Activated CD8-positive, alpha-beta T cell treated with anti-CD3 and anti-CD28 coated beads for 36 hours (primary cell): ENCODE measurements at regions of chr7 and their contacts with region 1.

Region 1: DNA sequence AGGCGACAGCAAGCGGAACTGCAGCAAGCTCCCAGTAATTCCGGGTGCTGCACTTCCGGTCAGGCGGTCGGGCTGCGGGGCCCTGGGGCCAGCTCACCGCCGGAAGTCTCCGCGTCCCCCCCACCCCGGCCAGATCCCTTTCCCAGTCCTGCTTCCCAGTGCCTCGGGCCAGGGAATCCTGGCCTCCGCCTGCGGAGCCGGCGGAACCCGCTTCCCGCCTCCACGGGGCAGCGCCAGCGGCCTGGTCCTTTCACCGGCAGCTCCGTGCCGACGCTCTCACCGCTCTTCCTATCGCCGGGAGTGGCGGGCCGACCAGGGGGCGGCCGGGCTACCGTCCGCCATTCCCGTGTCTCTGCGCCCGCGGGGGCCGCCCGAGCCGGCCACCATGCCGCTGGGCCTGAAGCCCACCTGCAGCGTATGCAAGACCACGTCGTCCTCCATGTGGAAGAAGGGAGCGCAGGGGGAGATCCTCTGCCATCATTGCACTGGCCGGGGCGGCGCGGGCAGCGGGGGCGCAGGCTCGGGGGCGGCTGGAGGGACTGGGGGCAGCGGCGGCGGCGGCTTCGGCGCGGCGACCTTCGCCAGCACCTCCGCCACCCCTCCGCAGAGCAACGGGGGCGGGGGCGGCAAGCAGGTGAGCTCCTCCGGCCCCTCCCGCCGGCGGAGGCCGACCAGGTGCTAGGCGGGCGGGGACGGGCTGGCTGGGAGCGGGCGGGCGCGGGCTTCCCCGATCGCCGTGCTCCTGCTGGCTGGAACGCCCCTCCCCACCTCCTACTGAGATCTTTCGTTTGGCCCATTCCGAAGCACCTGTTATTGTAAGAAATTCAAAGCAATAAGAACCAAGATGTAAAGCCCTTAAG is at the start of gene GATAD1:
- DNase-seq: peak; percentile 86
- ATAC-seq: peak; percentile 92
- H3K4me3 Mint-ChIP-seq: peak within 1 kb of the TSS; percentile 76
- H3K27ac Mint-ChIP-seq: peak within 1 kb of the TSS; percentile 93
- H3K4me1 Mint-ChIP-seq: peaks cover 18% of the 10 kb centered on the region
- H3K27me3 Mint-ChIP-seq: no peaks in the 10 kb centered on the region
- CTCF ChIP-seq: no peak
- total RNA-seq, gene GATAD1: 19.7 to 19.8 TPM

Region 2: GRCh38 chr7:92245487-92246362 is 201.8 kb before region 1 on chr7 and contains the starts of genes ANKIB1 and KRIT1:
- CTCF ChIA-PET with region 1: interaction called, 30 read pairs
- POLR2A ChIA-PET with region 1: interaction called, 9 read pairs
- intact Hi-C with region 1: no loop called
- DNase-seq: peak; percentile 92
- ATAC-seq: peak; percentile 80
- H3K4me3 Mint-ChIP-seq: peak within 1 kb of the TSS; percentile 100
- H3K27ac Mint-ChIP-seq: peak within 1 kb of the TSS; percentile 99
- H3K4me1 Mint-ChIP-seq: peaks cover 34% of the 10 kb centered on the region
- H3K27me3 Mint-ChIP-seq: no peaks in the 10 kb centered on the region
- CTCF ChIP-seq: no peak
- total RNA-seq, gene ANKIB1: 32.3 to 34.1 TPM
- total RNA-seq, gene KRIT1: 28.6 to 30.2 TPM

Region 3: DNA sequence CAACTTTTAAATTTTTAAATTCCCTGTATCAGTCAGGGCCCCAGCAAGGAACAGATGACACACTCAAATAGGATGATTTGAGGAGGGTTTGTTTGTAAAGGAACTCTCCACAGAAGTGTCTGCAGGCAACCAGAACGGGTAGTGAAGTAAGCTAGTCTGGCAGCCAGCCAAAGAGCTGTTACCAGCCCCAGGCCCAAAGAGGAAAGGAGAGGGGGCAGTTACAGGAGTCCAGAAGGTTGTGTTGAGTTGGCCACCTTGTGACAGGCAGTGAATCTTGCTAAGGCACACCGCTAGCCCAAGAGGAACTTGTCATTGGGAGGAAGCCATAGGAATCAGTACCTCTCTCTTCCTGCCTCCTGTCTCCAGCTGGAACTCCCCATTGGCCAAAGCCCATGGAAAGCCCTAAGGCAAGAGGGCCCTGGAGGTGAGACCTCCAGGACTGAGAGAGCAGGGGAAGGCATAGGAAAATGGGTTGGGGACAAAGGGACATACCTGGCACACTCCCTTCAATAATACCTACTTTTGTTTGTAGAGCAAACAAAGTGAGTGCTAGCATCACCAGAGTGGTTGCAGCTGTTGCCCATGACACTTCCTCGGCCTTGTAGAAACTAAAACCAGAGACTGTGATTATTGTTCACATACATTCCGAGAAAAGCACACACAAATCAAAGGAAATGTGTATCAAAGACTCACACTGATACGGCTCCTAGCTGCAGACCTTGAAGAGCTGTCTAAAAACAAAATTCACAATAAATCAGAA is 25.7 kb before region 1 on chr7:
- CTCF ChIA-PET with region 1: interaction called, 120 read pairs
- POLR2A ChIA-PET with region 1: interaction called, 5 read pairs
- intact Hi-C with region 1: loop called (anchors 1 kb)
- DNase-seq: no peak
- ATAC-seq: no peak
- H3K4me3 Mint-ChIP-seq: no peak overlapping the region
- H3K27ac Mint-ChIP-seq: no peak overlapping the region
- H3K4me1 Mint-ChIP-seq: peaks cover 8% of the 10 kb centered on the region
- H3K27me3 Mint-ChIP-seq: peaks cover 17% of the 10 kb centered on the region
- CTCF ChIP-seq: no peak

Region 4: DNA sequence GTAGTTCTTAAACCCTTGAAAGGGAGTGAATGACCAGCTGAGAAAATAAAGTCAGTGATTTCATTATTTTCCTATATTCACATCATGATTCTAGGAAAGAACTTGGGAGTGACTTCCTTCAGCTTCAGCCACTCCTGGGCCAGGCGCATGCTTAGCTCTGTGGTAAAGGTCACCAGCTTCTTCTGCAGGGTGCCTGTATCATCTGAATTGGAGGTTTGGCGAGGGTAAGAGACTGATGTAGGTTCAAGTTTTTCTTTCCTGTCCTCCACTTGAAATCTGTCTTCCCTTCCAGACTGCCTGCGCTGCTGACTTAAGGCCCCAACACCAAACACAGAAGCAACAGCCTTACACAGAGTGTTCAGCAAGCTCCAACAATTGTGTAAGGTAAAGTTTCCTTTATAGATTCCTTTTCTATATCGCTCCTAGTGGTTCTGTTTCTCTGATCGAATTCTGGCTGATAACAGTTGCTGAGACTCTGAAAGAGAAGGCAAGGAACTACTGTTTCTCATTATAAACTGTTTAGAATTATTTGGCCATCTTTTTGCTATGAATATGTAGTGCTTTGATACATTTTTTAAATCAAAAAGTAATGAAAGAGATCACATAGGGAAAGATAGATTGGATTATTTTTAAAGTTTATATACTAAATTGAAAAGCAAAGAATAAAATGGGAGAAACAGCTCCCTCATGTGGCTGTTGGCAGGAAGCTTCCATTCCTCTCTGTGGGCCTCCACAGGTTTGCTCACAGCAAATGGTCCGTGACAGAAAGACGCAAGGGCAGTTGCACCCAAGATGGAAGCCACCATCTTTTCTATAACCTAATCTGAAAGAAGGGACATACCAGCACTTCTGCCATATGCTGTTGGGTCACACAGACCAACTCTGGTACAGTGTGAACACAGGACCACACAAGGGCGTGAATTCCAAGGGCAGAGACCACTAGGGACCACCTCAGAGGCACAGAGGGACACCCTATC is 13.7 kb after region 1 on chr7:
- CTCF ChIA-PET with region 1: interaction called, 22 read pairs
- POLR2A ChIA-PET with region 1: interaction called, 10 read pairs
- intact Hi-C with region 1: no loop called
- DNase-seq: peak; percentile 41
- ATAC-seq: peak; percentile 80
- H3K4me3 Mint-ChIP-seq: no peak overlapping the region
- H3K27ac Mint-ChIP-seq: no peak overlapping the region
- H3K4me1 Mint-ChIP-seq: no peaks in the 10 kb centered on the region
- H3K27me3 Mint-ChIP-seq: no peaks in the 10 kb centered on the region
- CTCF ChIP-seq: peak; percentile 83

Region 5: DNA sequence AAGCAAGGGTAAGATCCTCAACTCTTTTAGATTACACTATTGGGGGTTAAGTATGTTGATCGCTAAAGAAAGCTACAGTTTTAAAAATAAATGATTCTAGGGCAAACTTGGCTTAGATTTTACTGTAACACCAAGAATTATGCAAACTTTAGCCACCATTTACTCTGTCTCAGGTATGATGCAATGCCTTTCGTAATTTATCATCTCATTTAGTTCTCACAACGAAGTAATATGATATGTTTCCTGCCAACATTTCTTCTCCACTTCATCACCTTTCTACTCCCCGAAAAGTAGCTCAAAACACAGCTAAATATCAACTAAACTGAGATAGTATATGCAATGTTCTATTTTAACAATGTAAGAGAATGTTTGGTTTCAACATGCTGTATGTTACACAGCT is 121.6 kb after region 1 on chr7:
- CTCF ChIA-PET with region 1: no interaction called
- POLR2A ChIA-PET with region 1: no interaction called
- intact Hi-C with region 1: no loop called
- DNase-seq: no peak
- ATAC-seq: no peak
- H3K4me3 Mint-ChIP-seq: no peak overlapping the region
- H3K27ac Mint-ChIP-seq: no peak overlapping the region
- H3K4me1 Mint-ChIP-seq: peaks cover 2% of the 10 kb centered on the region
- H3K27me3 Mint-ChIP-seq: no peaks in the 10 kb centered on the region
- CTCF ChIP-seq: no peak